Activated B cell treated with CpG ODN at 0.5 μM for 24 hours (primary cell): ENCODE measurements at regions of chr14 and their contacts with region 1.

Region 1: GRCh38 chr14:75542588-75543091 is 20.4 kb downstream of the BATF start:
- DNase-seq: peak; percentile 65
- ATAC-seq: peak; percentile 80
- H3K4me3 Mint-ChIP-seq: peak overlapping the region; percentile 74
- H3K27ac Mint-ChIP-seq: peak overlapping the region; percentile 99
- H3K4me1 Mint-ChIP-seq: peaks cover 78% of the 10 kb centered on the region
- H3K27me3 Mint-ChIP-seq: no peaks in the 10 kb centered on the region
- CTCF ChIP-seq: no peak

Region 2: GRCh38 chr14:75323571-75323970 is 219.1 kb before region 1 on chr14:
- CTCF ChIA-PET with region 1: no interaction called
- POLR2A ChIA-PET with region 1: no interaction called
- intact Hi-C with region 1: no loop called
- DNase-seq: no peak
- ATAC-seq: no peak
- H3K4me3 Mint-ChIP-seq: no peak overlapping the region
- H3K27ac Mint-ChIP-seq: no peak overlapping the region
- H3K4me1 Mint-ChIP-seq: no peaks in the 10 kb centered on the region
- H3K27me3 Mint-ChIP-seq: peaks cover 4% of the 10 kb centered on the region
- CTCF ChIP-seq: no peak

Region 3: GRCh38 chr14:75427482-75428229 is 115.0 kb before region 1 on chr14 and contains the start of gene JDP2:
- CTCF ChIA-PET with region 1: no interaction called
- POLR2A ChIA-PET with region 1: interaction called, 4 read pairs
- intact Hi-C with region 1: loop called (anchors 2 kb)
- DNase-seq: peak; percentile 57
- ATAC-seq: peak; percentile 53
- H3K4me3 Mint-ChIP-seq: peak within 1 kb of the TSS; percentile 88
- H3K27ac Mint-ChIP-seq: peak within 1 kb of the TSS; percentile 96
- H3K4me1 Mint-ChIP-seq: peaks cover 37% of the 10 kb centered on the region
- H3K27me3 Mint-ChIP-seq: no peaks in the 10 kb centered on the region
- CTCF ChIP-seq: no peak
- total RNA-seq, gene JDP2: 21.2 and 21.8 TPM in 2 replicates

Region 4: GRCh38 chr14:75469606-75470237 is 72.9 kb before region 1 on chr14:
- CTCF ChIA-PET with region 1: no interaction called
- POLR2A ChIA-PET with region 1: no interaction called
- intact Hi-C with region 1: no loop called
- DNase-seq: no peak
- ATAC-seq: no peak
- H3K4me3 Mint-ChIP-seq: no peak overlapping the region
- H3K27ac Mint-ChIP-seq: peak overlapping the region; percentile 89
- H3K4me1 Mint-ChIP-seq: peaks cover 57% of the 10 kb centered on the region
- H3K27me3 Mint-ChIP-seq: no peaks in the 10 kb centered on the region
- CTCF ChIP-seq: no peak

Region 5: DNA sequence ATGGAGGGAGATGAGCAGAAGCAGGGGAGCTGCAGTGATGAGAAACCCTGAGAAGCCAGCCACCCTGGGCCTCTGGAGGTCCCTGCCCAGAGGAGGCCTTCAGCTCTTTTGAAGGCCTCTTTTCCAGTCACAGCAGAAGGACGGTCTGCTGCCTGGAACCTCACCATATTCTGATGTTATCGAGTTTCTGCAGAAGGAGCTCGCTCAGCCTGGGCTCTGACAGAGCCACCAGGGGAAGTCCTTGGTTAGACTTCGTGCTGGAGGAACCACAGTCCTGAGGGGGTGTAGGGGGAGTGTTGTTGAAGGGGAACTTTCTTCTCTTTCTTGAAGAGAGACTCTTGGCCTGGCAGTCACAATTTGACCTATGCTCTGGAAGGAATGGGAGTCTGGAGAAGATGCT is 45.4 kb before region 1 on chr14:
- CTCF ChIA-PET with region 1: interaction called, 4 read pairs
- POLR2A ChIA-PET with region 1: interaction called, 9 read pairs
- intact Hi-C with region 1: loop called (anchors 2 kb)
- DNase-seq: no peak
- ATAC-seq: peak; percentile 71
- H3K4me3 Mint-ChIP-seq: peak overlapping the region; percentile 46
- H3K27ac Mint-ChIP-seq: peak overlapping the region; percentile 77
- H3K4me1 Mint-ChIP-seq: peaks cover 65% of the 10 kb centered on the region
- H3K27me3 Mint-ChIP-seq: no peaks in the 10 kb centered on the region
- CTCF ChIP-seq: no peak

Region 6: GRCh38 chr14:75531660-75532317 is 10.9 kb before region 1 on chr14:
- CTCF ChIA-PET with region 1: interaction called, 3 read pairs
- POLR2A ChIA-PET with region 1: interaction called, 27 read pairs
- intact Hi-C with region 1: no loop called
- DNase-seq: no peak
- ATAC-seq: no peak
- H3K4me3 Mint-ChIP-seq: no peak overlapping the region
- H3K27ac Mint-ChIP-seq: peak overlapping the region; percentile 9
- H3K4me1 Mint-ChIP-seq: peaks cover 59% of the 10 kb centered on the region
- H3K27me3 Mint-ChIP-seq: no peaks in the 10 kb centered on the region
- CTCF ChIP-seq: no peak

Region 7: GRCh38 chr14:75577729-75578101 is 35.1 kb after region 1 on chr14:
- CTCF ChIA-PET with region 1: interaction called, 8 read pairs
- POLR2A ChIA-PET with region 1: interaction called, 14 read pairs
- intact Hi-C with region 1: loop called (anchors 1 kb)
- DNase-seq: peak; percentile 60
- ATAC-seq: peak; percentile 85
- H3K4me3 Mint-ChIP-seq: peak overlapping the region; percentile 89
- H3K27ac Mint-ChIP-seq: peak overlapping the region; percentile 72
- H3K4me1 Mint-ChIP-seq: peaks cover 29% of the 10 kb centered on the region
- H3K27me3 Mint-ChIP-seq: peaks cover 3% of the 10 kb centered on the region
- CTCF ChIP-seq: peak; percentile 36